OCI-LY7 (cell line): ENCODE measurements at regions of chr14 and their contacts with region 1.

Region 1: DNA sequence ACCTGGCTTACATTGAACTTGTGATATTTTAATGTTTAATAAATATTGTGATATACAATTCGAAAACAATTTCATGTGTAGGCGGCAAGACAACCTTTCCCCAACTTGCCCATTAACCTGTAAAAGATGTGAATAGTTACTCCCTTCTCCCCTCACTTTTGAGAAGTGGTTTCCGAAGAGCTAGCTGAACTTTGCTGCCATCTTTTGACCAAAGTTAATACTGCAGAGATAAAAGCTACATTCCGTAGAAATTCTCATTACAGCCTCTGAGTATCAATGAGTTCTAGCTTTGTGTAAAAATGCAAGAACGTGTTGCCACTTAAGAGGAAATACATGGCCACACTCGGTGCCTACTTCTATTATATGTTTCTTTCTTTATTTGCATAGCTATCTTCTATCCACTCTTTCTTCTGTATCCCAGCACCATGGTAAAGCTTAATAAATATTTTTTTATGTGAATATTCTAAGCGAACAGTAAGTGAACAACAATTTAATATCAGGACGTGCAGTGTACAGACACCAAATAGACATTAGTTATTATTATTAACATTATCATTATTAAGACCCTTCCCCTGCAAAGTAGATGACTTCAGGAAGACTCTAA is 105.1 kb upstream of the TMEM260 start:
- DNase-seq: peak; percentile 49
- H3K4me3 ChIP-seq: no peak overlapping the region
- H3K27ac ChIP-seq: no peak overlapping the region
- H3K4me1 ChIP-seq: no peaks in the 10 kb centered on the region
- CTCF ChIP-seq: peak; percentile 87

Region 2: GRCh38 chr14:55446218-55446654 is 1028.3 kb before region 1 on chr14:
- CTCF ChIA-PET with region 1: no interaction called
- POLR2A ChIA-PET with region 1: no interaction called
- intact Hi-C with region 1: loop called (anchors 5 kb)
- DNase-seq: peak; percentile 71
- H3K4me3 ChIP-seq: no peak overlapping the region
- H3K27ac ChIP-seq: no peak overlapping the region
- H3K4me1 ChIP-seq: no peaks in the 10 kb centered on the region
- CTCF ChIP-seq: peak; percentile 91

Region 3: GRCh38 chr14:55864890-55865655 is 609.4 kb before region 1 on chr14:
- CTCF ChIA-PET with region 1: no interaction called
- POLR2A ChIA-PET with region 1: no interaction called
- intact Hi-C with region 1: loop called (anchors 10 kb)
- DNase-seq: peak; percentile 23
- H3K4me3 ChIP-seq: no peak overlapping the region
- H3K27ac ChIP-seq: no peak overlapping the region
- H3K4me1 ChIP-seq: no peaks in the 10 kb centered on the region
- CTCF ChIP-seq: peak; percentile 75

Region 4: GRCh38 chr14:56099081-56099797 is 375.3 kb before region 1 on chr14:
- CTCF ChIA-PET with region 1: no interaction called
- POLR2A ChIA-PET with region 1: interaction called, 12 read pairs
- intact Hi-C with region 1: no loop called
- DNase-seq: no peak
- H3K4me3 ChIP-seq: no peak overlapping the region
- H3K27ac ChIP-seq: no peak overlapping the region
- H3K4me1 ChIP-seq: no peaks in the 10 kb centered on the region
- CTCF ChIP-seq: no peak

Region 5: DNA sequence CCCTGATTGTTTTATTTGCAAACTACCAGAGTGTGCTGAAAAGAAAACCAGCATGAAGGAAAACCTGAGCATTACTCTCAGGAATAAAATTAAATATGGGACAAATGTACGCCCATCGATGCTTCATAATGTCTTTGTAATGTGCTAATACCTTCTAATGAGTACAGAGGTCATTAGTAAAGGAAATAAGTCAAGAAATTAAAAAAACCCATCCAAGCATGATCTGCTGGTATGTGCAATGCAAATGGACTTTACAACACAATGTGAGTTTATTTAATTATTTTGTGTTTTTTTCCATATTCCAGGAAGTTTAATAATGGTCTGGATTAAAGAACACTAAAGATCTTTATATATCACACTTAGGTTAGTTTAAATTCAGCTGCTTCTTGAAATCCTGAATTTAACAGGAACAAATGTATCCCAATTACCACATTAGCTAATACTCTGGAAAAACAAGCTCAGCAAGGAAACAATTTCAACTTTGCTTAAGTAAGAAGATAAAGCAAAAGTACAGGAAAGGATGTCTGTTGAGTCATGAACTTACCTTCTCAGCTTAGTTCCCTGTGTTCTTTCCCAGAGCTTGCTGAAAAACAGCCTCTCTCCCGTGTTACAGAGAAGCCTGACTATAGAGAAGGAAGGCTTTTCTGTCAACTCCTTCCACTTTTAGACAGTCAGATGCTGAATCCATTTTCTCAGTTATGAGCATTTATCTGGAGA is 74.3 kb before region 1 on chr14:
- CTCF ChIA-PET with region 1: interaction called, 25 read pairs
- POLR2A ChIA-PET with region 1: no interaction called
- intact Hi-C with region 1: no loop called
- DNase-seq: no peak
- H3K4me3 ChIP-seq: no peak overlapping the region
- H3K27ac ChIP-seq: no peak overlapping the region
- H3K4me1 ChIP-seq: no peaks in the 10 kb centered on the region
- CTCF ChIP-seq: no peak